Posterior vena cava (tissue), 2 donors: ENCODE measurements at regions of chr17 and their contacts with region 1.

Region 1: DNA sequence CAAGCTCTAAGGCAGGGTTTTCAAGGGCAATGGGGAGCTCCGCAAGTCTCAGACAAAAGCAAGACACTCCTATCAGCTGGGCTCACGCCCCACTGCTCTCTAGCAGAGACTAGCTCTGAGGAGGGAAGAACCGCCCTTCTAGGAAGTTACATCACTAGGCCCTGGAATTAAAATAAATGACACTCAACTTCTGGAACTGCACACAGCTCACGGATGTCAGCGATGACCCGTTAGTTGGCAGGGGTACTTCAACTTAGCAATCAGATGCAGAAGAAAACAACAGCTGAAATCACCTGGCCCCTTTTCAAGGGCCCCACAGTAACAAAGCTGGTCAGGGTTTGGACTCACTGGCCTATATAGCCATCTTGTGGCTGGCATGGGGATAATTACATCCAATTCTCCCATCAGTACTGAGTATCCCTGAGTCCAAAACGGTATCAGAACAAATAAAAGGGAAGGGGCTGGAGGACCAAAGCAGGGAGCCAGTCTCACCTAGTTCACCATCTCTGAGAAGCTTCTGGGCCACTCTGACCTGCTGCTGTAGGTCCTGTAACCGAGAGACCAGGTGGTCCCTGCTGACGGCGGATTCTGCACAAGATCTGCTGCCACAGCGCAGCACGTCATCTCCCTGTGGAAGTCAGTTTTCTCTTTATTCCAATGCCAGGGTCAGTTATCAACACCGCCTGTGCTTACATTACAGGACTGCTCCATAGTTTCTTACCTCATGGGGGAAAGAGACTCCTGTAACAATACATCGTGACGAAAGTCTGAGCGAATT is 22.2 kb downstream of the SERPINF1 start:
- DNase-seq: peak; percentile 95

Region 2: DNA sequence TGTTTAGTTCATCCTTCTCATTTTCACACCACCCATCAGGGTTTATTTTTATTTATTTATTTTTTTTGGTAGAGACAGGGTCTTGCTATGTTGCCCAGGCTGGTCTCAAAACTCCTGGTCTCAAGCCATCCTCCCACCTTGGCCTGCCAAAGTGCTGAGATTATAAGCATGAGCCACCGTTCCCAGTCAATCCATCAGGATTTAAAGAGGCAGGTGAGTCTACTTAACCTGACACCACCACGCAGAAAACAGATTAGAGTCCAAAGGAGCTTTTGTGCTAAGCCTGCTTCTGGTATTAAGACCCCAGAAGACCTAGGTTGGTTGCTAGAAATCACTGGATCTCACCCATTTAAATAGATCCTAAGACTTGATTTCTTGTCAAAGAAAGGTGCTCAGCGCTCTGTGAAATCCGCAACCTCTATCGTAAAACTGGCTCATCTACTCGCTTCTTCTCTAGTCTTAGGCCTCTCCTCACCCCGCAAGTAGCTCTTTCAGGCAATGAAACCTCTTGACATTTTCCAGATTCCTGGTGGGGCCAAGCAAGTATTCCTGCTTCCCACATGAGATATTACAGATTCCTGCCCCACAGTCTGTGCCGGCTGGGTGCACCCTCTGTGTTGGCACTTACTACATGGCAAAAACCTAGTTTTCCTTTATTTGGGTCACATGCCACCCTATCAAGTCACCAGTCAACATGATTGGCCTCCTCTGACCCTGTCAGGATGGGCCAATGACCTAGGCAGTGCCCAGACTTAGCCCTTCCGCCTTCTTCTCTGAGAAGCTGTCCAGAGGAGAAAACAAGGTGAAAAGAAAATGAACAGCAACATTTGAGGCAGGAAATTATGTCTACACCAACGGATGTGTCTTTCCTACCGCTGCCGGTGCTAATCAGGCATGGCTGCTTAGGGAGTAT is 230.4 kb before region 1 on chr17:
- intact Hi-C with region 1: no loop called
- DNase-seq: peak; percentile 29

Region 3: DNA sequence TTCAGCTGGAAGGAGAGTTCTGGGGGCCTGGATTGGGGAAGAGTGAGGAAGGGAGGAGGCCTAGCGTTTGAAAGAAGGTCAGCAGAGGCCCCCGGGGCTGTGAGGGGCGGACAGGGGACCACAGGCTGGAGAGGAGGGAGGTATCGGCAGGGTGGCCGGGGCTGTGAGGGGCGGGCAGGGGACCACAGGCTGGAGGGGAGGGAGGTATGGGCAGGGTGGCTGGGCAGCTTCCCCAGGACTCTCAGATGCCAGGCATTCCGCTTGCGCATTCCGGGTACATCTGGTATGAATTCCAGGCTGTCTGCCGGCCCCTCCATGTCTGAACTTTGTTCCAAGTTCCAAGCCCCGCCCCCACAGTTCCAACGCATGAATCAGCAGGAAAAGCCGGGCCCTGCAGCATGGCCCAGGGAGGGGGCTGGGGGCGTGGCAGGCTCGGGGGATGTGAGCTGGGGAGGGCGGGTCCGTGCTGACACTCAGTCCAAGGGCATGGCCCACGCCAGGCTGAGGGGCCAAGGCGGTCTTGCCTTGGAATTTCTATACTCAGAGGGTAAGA is 69.5 kb before region 1 on chr17:
- intact Hi-C with region 1: no loop called
- DNase-seq: peak; percentile 99

Region 4: GRCh38 chr17:1764284-1764683 is 19.7 kb before region 1 on chr17:
- intact Hi-C with region 1: loop called in 1 of 2 experiments (anchors 2 kb)
- DNase-seq: peak; percentile 92

Region 5: DNA sequence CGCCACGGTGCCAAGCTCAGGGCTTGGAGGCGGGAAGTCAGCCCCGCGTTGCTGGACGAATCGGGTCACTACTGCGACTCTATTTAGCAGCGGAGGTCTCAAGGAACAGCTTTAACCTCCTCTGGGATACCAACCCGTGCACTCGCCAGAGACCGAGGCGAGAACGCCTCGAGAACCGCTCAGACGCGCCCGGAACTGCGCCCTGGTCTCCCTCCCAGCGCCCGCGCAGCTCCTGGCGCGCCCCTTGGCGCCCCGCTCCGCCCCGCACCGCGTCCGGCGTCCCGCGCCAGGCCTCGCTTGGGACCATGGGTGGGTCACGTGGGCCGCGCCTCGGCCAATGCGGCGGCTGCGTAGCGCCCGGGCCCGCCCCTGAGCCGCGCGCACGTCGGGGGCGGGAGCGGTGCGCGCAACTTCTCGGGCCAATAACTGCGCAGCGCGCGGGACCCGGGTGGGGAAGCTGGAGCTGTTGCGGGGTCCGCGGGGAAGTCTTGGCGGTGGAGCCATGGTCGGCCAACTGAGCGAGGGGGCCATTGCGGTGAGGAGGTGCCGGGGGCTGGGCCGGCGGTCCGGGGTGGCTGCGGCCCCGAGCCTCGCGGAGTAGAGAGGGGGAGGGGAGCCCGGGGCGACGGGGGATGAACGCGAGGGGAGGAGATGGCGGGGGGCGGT is 45.7 kb after region 1 on chr17 and contains the starts of genes RPA1 and SMYD4:
- intact Hi-C with region 1: loop called in 1 of 2 experiments (anchors 5 kb)
- DNase-seq: peak; percentile 96
- total RNA-seq, gene RPA1: 77.3 to 86.2 TPM
- total RNA-seq, gene SMYD4: 16.8 to 19.7 TPM

Region 6: DNA sequence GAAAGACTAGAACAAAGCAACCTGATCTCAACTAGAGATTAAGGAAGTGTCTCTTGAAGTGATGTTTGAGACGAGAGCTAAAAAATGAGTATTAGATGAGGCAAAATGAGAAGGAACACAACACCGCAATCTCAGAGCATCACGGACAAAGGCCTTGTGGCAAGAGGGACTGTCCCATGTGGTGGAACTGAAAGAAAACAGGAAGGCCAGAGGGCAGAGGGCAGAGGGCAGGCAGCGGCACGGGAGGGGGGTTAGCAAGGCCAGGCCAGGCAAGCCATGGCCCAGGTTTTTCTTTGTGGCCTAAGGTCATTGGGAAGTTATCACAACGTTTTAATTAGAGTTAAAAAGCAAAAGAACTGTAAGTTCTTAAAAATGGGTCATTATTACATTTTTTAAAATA is 68.3 kb after region 1 on chr17:
- intact Hi-C with region 1: no loop called
- DNase-seq: no peak